H1 (cell line): ENCODE measurements at regions of chr5 and their contacts with region 1.

Region 1: GRCh38 chr5:147098233-147098790 is 136.5 kb upstream of the STK32A start:
- DNase-seq: peak in 1 of 2 experiments; percentile 67
- H3K4me3 ChIP-seq: no peak overlapping the region
- H3K27ac ChIP-seq: no peak overlapping the region
- H3K4me1 ChIP-seq: peaks cover 0 to 3% (median 0%) of the 10 kb centered on the region in 4 experiments; a peak in 3 of 7 replicates
- H3K27me3 ChIP-seq: no peaks in the 10 kb centered on the region
- CTCF ChIP-seq: peak in 2 of 3 experiments; percentile 58 to 60; a peak in 3 of 4 replicates
- EP300 ChIP-seq: no peak
- POLR2A ChIP-seq: no peak
- RAD21 ChIP-seq: peak; percentile 41 to 58

Region 2: DNA sequence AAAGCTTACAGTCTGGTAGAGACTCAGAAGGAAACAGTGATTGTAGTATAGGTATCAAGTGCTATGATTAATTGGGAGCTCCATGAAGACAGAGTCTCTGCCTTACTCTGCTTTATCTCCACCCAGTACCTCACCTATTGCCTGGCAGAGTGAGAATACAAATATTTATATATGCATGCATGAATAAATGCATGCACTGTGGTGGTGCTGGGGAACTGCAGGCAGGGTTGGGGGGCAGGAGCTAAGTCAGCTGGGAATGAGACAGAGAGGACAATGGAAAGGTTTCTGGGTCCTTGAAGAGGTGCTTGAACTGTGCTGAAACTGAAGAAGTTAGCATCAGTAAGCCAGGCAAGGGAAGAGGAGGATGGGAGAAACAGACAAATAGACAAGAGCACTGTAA is 139.0 kb before region 1 on chr5:
- CTCF ChIA-PET with region 1: no interaction called
- POLR2A ChIA-PET with region 1: no interaction called
- DNase-seq: no peak
- H3K4me3 ChIP-seq: no peak overlapping the region
- H3K27ac ChIP-seq: no peak overlapping the region
- H3K4me1 ChIP-seq: no peaks in the 10 kb centered on the region
- H3K27me3 ChIP-seq: no peaks in the 10 kb centered on the region
- CTCF ChIP-seq: no peak
- EP300 ChIP-seq: no peak
- POLR2A ChIP-seq: no peak
- RAD21 ChIP-seq: no peak

Region 3: GRCh38 chr5:147055850-147056566 is 42.3 kb before region 1 on chr5:
- CTCF ChIA-PET with region 1: interaction called, 10 read pairs
- POLR2A ChIA-PET with region 1: no interaction called
- DNase-seq: no peak
- H3K4me3 ChIP-seq: no peak overlapping the region
- H3K27ac ChIP-seq: no peak overlapping the region
- H3K4me1 ChIP-seq: no peaks in the 10 kb centered on the region
- H3K27me3 ChIP-seq: no peaks in the 10 kb centered on the region
- CTCF ChIP-seq: no peak
- EP300 ChIP-seq: no peak
- POLR2A ChIP-seq: no peak
- RAD21 ChIP-seq: no peak

Region 4: GRCh38 chr5:147084702-147085101 is 13.6 kb before region 1 on chr5:
- CTCF ChIA-PET with region 1: interaction called, 41 read pairs
- POLR2A ChIA-PET with region 1: no interaction called
- DNase-seq: no peak
- H3K4me3 ChIP-seq: no peak overlapping the region
- H3K27ac ChIP-seq: no peak overlapping the region
- H3K4me1 ChIP-seq: no peaks in the 10 kb centered on the region
- H3K27me3 ChIP-seq: no peaks in the 10 kb centered on the region
- CTCF ChIP-seq: no peak
- EP300 ChIP-seq: no peak
- POLR2A ChIP-seq: no peak
- RAD21 ChIP-seq: no peak

Region 5: DNA sequence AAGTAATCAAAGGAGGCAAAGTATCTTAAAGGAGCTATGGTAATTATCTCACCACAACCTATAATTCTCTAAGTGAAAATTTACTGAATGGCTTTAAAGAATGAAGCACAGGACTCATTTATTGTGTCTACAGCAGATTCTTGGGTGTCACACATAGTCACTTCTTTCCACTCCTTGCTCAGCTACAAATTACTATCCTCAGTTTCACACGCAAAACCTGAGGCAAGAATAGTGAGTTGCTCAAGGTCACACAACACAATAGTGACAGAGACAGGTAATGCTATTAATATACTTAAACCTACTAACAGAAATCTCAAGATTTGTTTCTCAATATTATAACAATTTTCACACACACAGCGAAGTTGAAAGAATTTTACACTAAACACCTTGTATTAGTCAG is 15.7 kb after region 1 on chr5:
- CTCF ChIA-PET with region 1: interaction called, 13 read pairs
- POLR2A ChIA-PET with region 1: no interaction called
- DNase-seq: no peak
- H3K4me3 ChIP-seq: no peak overlapping the region
- H3K27ac ChIP-seq: no peak overlapping the region
- H3K4me1 ChIP-seq: no peaks in the 10 kb centered on the region
- H3K27me3 ChIP-seq: no peaks in the 10 kb centered on the region
- CTCF ChIP-seq: no peak
- EP300 ChIP-seq: no peak
- POLR2A ChIP-seq: no peak
- RAD21 ChIP-seq: no peak

Region 6: DNA sequence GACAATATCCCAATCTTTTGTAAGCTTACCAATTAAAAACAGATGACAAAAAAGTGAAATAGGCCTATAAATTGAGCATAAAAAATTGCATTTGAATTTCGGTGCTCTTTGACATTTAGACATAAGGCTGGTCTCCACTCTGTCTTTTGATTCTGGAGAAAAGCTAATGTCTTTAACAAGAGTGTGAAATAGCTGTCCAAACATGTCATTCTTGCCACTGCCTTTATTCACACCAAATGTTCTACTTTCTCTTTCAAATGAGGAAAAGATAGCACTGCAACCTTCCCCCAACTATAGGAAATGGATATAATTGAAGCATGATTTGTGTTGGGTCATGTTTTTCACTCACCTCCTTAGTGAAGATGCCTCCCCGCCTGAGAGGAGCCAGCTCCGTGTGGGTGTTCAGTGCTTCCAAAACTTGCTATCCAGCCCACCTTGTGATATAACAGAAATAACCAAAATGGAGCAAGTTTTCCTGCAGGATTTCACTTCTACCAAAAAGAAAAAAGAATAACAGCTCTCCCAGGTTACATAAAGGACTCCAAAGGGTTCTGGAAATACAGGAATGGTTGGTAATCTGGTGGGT is 81.3 kb after region 1 on chr5:
- CTCF ChIA-PET with region 1: interaction called, 11 read pairs
- POLR2A ChIA-PET with region 1: no interaction called
- DNase-seq: no peak
- H3K4me3 ChIP-seq: no peak overlapping the region
- H3K27ac ChIP-seq: no peak overlapping the region
- H3K4me1 ChIP-seq: no peaks in the 10 kb centered on the region
- H3K27me3 ChIP-seq: no peaks in the 10 kb centered on the region; a peak in 1 of 7 replicates
- CTCF ChIP-seq: no peak
- EP300 ChIP-seq: no peak
- POLR2A ChIP-seq: no peak
- RAD21 ChIP-seq: no peak

Region 7: DNA sequence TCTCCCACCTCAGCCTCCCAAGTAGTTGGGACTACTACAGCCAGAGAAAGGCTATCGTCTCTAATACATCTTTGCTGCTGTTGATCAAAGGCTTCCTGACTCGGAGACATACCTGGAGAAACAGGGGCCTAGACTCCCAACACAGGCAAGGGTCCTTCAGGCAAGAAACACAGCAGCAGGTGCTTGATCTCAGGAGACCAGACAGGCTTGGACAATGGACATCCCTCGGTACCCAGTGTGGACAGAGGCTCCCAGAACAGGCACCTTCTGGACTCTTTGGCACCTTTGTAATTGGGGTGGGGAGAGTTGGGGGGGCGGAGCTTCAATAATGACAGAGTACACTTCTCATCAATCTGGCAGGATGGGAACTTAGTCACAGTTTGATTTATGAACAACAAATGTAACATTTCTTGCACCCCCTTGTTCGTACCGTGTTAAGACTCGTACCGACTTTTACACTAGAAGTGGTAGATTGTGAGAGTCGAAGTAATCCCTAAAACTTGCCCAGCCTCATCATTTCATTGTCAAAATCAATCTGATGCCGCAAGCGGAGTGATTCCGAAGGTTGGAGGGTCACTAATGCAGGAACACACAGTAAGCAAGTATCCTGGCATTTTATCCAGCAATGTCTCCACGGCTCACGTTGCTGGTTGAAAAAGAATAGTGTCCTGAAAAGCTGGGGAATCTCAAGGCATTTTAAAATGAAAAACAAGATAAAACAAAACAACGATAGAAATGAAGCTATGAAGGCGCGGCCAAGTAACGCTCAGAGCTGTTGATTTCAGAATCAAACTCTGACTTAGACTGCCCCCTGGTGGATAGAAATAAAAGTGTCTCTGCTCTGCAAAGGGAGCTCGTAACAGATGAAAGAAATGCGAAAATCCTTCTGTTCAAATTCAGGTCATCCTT is 90.1 kb after region 1 on chr5:
- CTCF ChIA-PET with region 1: interaction called, 46 read pairs
- POLR2A ChIA-PET with region 1: no interaction called
- DNase-seq: peak in 1 of 2 experiments; percentile 50
- H3K4me3 ChIP-seq: no peak overlapping the region
- H3K27ac ChIP-seq: no peak overlapping the region
- H3K4me1 ChIP-seq: peaks cover 0 to 15% (median 5%) of the 10 kb centered on the region in 4 experiments; a peak in 3 of 7 replicates
- H3K27me3 ChIP-seq: no peaks in the 10 kb centered on the region
- CTCF ChIP-seq: peak in 2 of 3 experiments; percentile 66 to 80; a peak in 3 of 4 replicates
- EP300 ChIP-seq: no peak
- POLR2A ChIP-seq: no peak
- RAD21 ChIP-seq: peak; percentile 88 to 94

Region 8: DNA sequence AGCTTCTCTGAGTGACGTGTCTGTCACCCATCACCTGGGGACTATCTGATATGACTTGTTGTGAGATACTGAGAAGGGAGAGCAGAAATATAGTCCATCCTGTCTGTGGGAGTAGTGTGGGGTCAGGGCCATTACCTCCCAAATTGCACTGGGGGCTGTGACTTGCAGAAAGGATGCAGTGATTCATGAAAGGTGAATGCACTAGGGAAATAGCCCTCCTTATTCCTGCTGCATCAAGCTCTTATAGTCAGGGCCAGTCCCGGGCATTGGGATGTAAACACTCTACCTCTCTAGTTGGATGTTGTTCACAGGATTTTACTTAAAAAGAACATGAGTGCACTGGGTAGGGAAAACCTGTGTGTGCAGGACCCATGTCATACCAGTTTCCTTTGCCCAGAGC is 261.3 kb after region 1 on chr5:
- CTCF ChIA-PET with region 1: no interaction called
- POLR2A ChIA-PET with region 1: no interaction called
- DNase-seq: no peak
- H3K4me3 ChIP-seq: no peak overlapping the region
- H3K27ac ChIP-seq: no peak overlapping the region
- H3K4me1 ChIP-seq: no peaks in the 10 kb centered on the region
- H3K27me3 ChIP-seq: no peaks in the 10 kb centered on the region
- CTCF ChIP-seq: no peak
- EP300 ChIP-seq: no peak
- POLR2A ChIP-seq: no peak
- RAD21 ChIP-seq: no peak